IMR-90 (cell line): ENCODE measurements at regions of chr1 and their contacts with region 1.

Region 1: GRCh38 chr1:147890177-147890790 is 12.3 kb upstream of the GJA8 start:
- DNase-seq: peak; percentile 29
- ATAC-seq: peak; percentile 77
- H3K4me3 ChIP-seq: no peak overlapping the region
- H3K27ac ChIP-seq: no peak overlapping the region
- H3K4me1 ChIP-seq: no peaks in the 10 kb centered on the region
- H3K27me3 ChIP-seq: peaks cover 4% of the 10 kb centered on the region
- CTCF ChIP-seq: peak; percentile 34
- POLR2A ChIP-seq: no peak
- RAD21 ChIP-seq: peak; percentile 46

Region 2: GRCh38 chr1:147172168-147172992 is 717.9 kb before region 1 on chr1 and contains the start of gene PRKAB2:
- CTCF ChIA-PET with region 1: no interaction called
- POLR2A ChIA-PET with region 1: no interaction called
- dilution Hi-C with region 1: no loop called
- in situ Hi-C with region 1: no loop called
- intact Hi-C with region 1: loop called (anchors 2 kb)
- DNase-seq: peak; percentile 97
- ATAC-seq: peak; percentile 93
- H3K4me3 ChIP-seq: peak within 1 kb of the TSS; percentile 76
- H3K27ac ChIP-seq: peak within 1 kb of the TSS; percentile 88
- H3K4me1 ChIP-seq: peaks cover 6% of the 10 kb centered on the region
- H3K27me3 ChIP-seq: no peaks in the 10 kb centered on the region
- CTCF ChIP-seq: peak; percentile 92
- POLR2A ChIP-seq: peak; percentile 66
- RAD21 ChIP-seq: peak; percentile 62
- total RNA-seq, gene PRKAB2: 8.4 and 10.6 TPM in 2 replicates

Region 3: GRCh38 chr1:147389532-147390524 is 500.5 kb before region 1 on chr1:
- CTCF ChIA-PET with region 1: no interaction called
- POLR2A ChIA-PET with region 1: no interaction called
- dilution Hi-C with region 1: no loop called
- in situ Hi-C with region 1: no loop called
- intact Hi-C with region 1: loop called (anchors 5 kb)
- DNase-seq: peak; percentile 58
- ATAC-seq: peak; percentile 100
- H3K4me3 ChIP-seq: no peak overlapping the region
- H3K27ac ChIP-seq: no peak overlapping the region
- H3K4me1 ChIP-seq: no peaks in the 10 kb centered on the region
- H3K27me3 ChIP-seq: peaks cover 1% of the 10 kb centered on the region; the same call in 1 of the 2 replicates
- CTCF ChIP-seq: peak; percentile 74
- POLR2A ChIP-seq: no peak
- RAD21 ChIP-seq: peak; percentile 82

Region 4: GRCh38 chr1:147434921-147435320 is 455.4 kb before region 1 on chr1:
- CTCF ChIA-PET with region 1: no interaction called
- POLR2A ChIA-PET with region 1: no interaction called
- dilution Hi-C with region 1: no loop called
- in situ Hi-C with region 1: no loop called
- intact Hi-C with region 1: no loop called
- DNase-seq: no peak
- ATAC-seq: no peak
- H3K4me3 ChIP-seq: no peak overlapping the region
- H3K27ac ChIP-seq: no peak overlapping the region
- H3K4me1 ChIP-seq: no peaks in the 10 kb centered on the region
- H3K27me3 ChIP-seq: no peaks in the 10 kb centered on the region
- CTCF ChIP-seq: no peak
- POLR2A ChIP-seq: no peak
- RAD21 ChIP-seq: no peak

Region 5: GRCh38 chr1:147627435-147628110 is 262.7 kb before region 1 on chr1:
- CTCF ChIA-PET with region 1: no interaction called
- POLR2A ChIA-PET with region 1: interaction called, 3 read pairs
- dilution Hi-C with region 1: no loop called
- in situ Hi-C with region 1: loop called (anchors 10 kb)
- intact Hi-C with region 1: no loop called
- DNase-seq: peak; percentile 44
- ATAC-seq: peak; percentile 93
- H3K4me3 ChIP-seq: no peak overlapping the region
- H3K27ac ChIP-seq: no peak overlapping the region
- H3K4me1 ChIP-seq: no peaks in the 10 kb centered on the region; the same call in 1 of the 2 replicates
- H3K27me3 ChIP-seq: no peaks in the 10 kb centered on the region
- CTCF ChIP-seq: peak; percentile 87
- POLR2A ChIP-seq: no peak
- RAD21 ChIP-seq: peak; percentile 76

Region 6: GRCh38 chr1:147700042-147701006 is 190.0 kb before region 1 on chr1:
- CTCF ChIA-PET with region 1: no interaction called
- POLR2A ChIA-PET with region 1: no interaction called
- dilution Hi-C with region 1: no loop called
- in situ Hi-C with region 1: no loop called
- intact Hi-C with region 1: loop called (anchors 2 kb)
- DNase-seq: peak; percentile 64
- ATAC-seq: peak; percentile 91
- H3K4me3 ChIP-seq: no peak overlapping the region
- H3K27ac ChIP-seq: no peak overlapping the region
- H3K4me1 ChIP-seq: no peaks in the 10 kb centered on the region
- H3K27me3 ChIP-seq: peaks cover 4% of the 10 kb centered on the region
- CTCF ChIP-seq: peak; percentile 85
- POLR2A ChIP-seq: no peak
- RAD21 ChIP-seq: peak; percentile 72

Region 7: DNA sequence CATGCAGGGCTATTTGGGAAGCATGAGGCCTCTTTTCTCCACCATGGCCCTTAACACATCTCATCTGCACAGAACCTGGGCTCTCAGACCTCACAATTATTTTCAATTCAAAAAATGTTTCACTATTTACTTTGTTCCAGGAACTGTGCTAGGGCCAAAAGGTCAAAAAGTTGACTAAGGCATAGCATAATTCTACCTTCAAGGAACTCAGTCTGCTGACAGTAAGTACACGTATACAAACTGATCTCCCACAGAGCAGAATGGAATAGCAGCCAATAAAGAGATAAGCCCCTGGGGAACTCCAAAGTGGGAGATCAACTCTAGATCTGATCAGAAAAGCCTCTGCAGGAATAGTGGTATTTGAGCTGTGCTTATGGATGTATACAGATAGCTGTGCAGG is 21.3 kb before region 1 on chr1:
- CTCF ChIA-PET with region 1: no interaction called
- POLR2A ChIA-PET with region 1: no interaction called
- dilution Hi-C with region 1: no loop called
- in situ Hi-C with region 1: no loop called
- intact Hi-C with region 1: no loop called
- DNase-seq: no peak
- ATAC-seq: no peak
- H3K4me3 ChIP-seq: no peak overlapping the region
- H3K27ac ChIP-seq: no peak overlapping the region
- H3K4me1 ChIP-seq: no peaks in the 10 kb centered on the region
- H3K27me3 ChIP-seq: no peaks in the 10 kb centered on the region
- CTCF ChIP-seq: no peak
- POLR2A ChIP-seq: no peak
- RAD21 ChIP-seq: no peak